T-cell (primary cell): ENCODE measurements at regions of chr7 and their contacts with region 1.

Region 1: GRCh38 chr7:116929914-116930913 is 23.1 kb upstream of the ST7 start:
- DNase-seq: peak; percentile 34 to 85 (median 68)
- ATAC-seq: peak; percentile 81 to 87 (median 84)
- H3K4me3 ChIP-seq: no peak overlapping the region
- H3K4me3 Mint-ChIP-seq: no peak overlapping the region
- H3K27ac ChIP-seq: no peak overlapping the region
- H3K27ac Mint-ChIP-seq: no peak overlapping the region
- H3K4me1 ChIP-seq: peaks cover 0 to 4% of the 10 kb centered on the region in 2 experiments
- H3K4me1 Mint-ChIP-seq: peaks cover 3 to 11% (median 7%) of the 10 kb centered on the region in 3 donors
- H3K27me3 ChIP-seq: peaks cover 0 to 4% of the 10 kb centered on the region in 2 experiments
- H3K27me3 Mint-ChIP-seq: peaks cover 1 to 4% of the 10 kb centered on the region in 2 donors

Region 2: GRCh38 chr7:117119192-117119924 is 189.1 kb after region 1 on chr7:
- CTCF ChIA-PET with region 1: interaction called, 10 to 84 read pairs
- POLR2A ChIA-PET with region 1: no interaction called
- DNase-seq: peak; percentile 42 to 85 (median 71)
- ATAC-seq: peak in 1 of 4 experiments; percentile 32
- H3K4me3 ChIP-seq: no peak overlapping the region
- H3K4me3 Mint-ChIP-seq: no peak overlapping the region
- H3K27ac ChIP-seq: no peak overlapping the region
- H3K27ac Mint-ChIP-seq: no peak overlapping the region
- H3K4me1 ChIP-seq: peaks cover 0 to 2% of the 10 kb centered on the region in 2 experiments
- H3K4me1 Mint-ChIP-seq: no peaks in the 10 kb centered on the region
- H3K27me3 ChIP-seq: no peaks in the 10 kb centered on the region
- H3K27me3 Mint-ChIP-seq: no peaks in the 10 kb centered on the region